ENCODE measurements at regions of chr1 and their contacts with region 1.

Region 1: GRCh38 chr1:167599957-167600581 is 30.0 kb upstream of the RCSD1 start:
- DNase-seq: peak; percentile 69
- H3K4me3 Mint-ChIP-seq: no peak overlapping the region
- H3K27ac Mint-ChIP-seq: peak overlapping the region; percentile 83
- H3K4me1 Mint-ChIP-seq: peaks cover 44% of the 10 kb centered on the region
- H3K27me3 Mint-ChIP-seq: peaks cover 5% of the 10 kb centered on the region

Region 2: GRCh38 chr1:167617153-167618147 is 17.4 kb after region 1 on chr1:
- CTCF ChIA-PET with region 1: interaction called, 15 read pairs
- POLR2A ChIA-PET with region 1: interaction called, 3 read pairs
- DNase-seq: peak; percentile 38
- H3K4me3 Mint-ChIP-seq: peak overlapping the region; percentile 58
- H3K27ac Mint-ChIP-seq: peak overlapping the region; percentile 92
- H3K4me1 Mint-ChIP-seq: peaks cover 61% of the 10 kb centered on the region
- H3K27me3 Mint-ChIP-seq: no peaks in the 10 kb centered on the region

Region 3: DNA sequence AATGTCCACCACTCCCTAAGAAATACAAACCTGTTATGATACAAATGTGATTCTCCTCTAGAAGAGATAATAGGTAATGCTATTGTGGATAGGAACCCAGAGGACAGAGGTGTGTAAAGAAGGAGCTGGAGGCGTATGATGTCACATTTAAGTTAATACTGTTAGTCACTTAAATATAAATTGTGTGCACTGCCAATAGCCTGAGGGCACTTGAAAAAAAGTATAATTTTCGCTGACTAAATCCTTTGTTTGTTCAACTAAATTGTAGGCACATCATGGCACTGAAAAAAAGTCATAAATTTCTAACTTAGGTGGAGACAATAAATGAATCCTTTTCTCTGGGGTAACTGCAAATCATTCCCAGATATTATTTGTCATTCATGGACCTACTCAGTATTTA is 34.4 kb after region 1 on chr1:
- CTCF ChIA-PET with region 1: interaction called, 19 read pairs
- POLR2A ChIA-PET with region 1: interaction called, 9 read pairs
- DNase-seq: no peak
- H3K4me3 Mint-ChIP-seq: peak overlapping the region; percentile 43
- H3K27ac Mint-ChIP-seq: peak overlapping the region; percentile 70
- H3K4me1 Mint-ChIP-seq: peaks cover 76% of the 10 kb centered on the region
- H3K27me3 Mint-ChIP-seq: no peaks in the 10 kb centered on the region

Region 4: GRCh38 chr1:167687919-167688519 is 88.0 kb after region 1 on chr1:
- CTCF ChIA-PET with region 1: interaction called, 18 read pairs
- POLR2A ChIA-PET with region 1: no interaction called
- DNase-seq: peak; percentile 85
- H3K4me3 Mint-ChIP-seq: no peak overlapping the region
- H3K27ac Mint-ChIP-seq: peak overlapping the region; percentile 27
- H3K4me1 Mint-ChIP-seq: peaks cover 13% of the 10 kb centered on the region
- H3K27me3 Mint-ChIP-seq: no peaks in the 10 kb centered on the region

Measured in activated CD4-positive, alpha-beta T cell treated with anti-CD3 and anti-CD28 coated beads, Interleukin-2, amount 10 ng/mL, durations not matched to agents 7 days and 5 days (primary cell).